ENCODE measurements at regions of chrX and their contacts with region 1.

Region 1: GRCh38 chrX:130086447-130087206 is 23.7 kb downstream of the ELF4 start:
- DNase-seq: peak; percentile 63
- H3K4me3 Mint-ChIP-seq: peak overlapping the region; percentile 80
- H3K27ac Mint-ChIP-seq: peak overlapping the region; percentile 91
- H3K4me1 Mint-ChIP-seq: peaks cover 46% of the 10 kb centered on the region
- H3K27me3 Mint-ChIP-seq: no peaks in the 10 kb centered on the region

Region 2: DNA sequence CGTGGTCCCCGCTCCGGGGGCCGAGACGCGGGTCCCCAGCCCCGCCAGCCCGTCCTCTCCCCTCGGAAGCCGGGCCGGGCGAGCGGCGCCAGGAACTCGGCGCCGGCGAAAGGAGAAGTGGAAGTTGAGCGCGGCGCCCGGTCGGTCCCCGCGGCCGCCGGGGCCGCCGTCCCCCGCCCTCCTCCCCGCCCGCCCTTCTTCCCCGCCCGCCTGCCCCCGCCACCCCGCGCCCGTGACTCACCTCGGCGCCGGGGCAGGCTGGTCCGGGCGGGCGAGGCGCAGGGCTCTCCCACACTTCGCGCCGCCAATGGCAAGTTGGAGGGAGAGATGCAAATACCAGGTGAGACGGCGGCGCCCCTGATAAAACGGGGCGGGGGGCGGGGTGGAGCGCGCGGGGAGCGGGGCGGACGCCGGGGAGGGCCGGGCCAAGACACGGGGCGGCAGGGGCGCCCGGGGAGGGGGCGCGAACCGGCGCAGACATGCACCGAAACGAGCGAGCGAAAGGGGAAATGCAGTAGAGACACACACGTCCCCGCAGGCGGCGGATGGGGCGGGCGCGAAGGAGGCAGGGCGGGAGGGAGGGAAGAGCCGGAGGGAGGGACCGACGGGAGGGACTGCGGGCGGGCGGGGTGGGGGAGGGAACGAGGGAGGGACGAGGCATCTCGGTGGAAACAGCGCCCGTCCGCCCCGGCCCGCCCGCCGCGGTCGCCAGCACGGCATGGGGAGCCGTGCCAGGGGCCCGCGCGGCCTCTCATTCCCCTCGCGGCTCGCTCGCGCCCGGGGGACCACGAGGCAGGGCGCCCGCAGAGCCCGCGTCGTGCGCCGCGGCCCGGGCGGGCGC is 24.0 kb after region 1 on chrX and contains the start of gene ELF4:
- intact Hi-C with region 1: loop called (anchors 2 kb)
- DNase-seq: peak; percentile 29
- H3K4me3 Mint-ChIP-seq: peak within 1 kb of the TSS; percentile 94
- H3K27ac Mint-ChIP-seq: peak within 1 kb of the TSS; percentile 84
- H3K4me1 Mint-ChIP-seq: peaks cover 34% of the 10 kb centered on the region
- H3K27me3 Mint-ChIP-seq: no peaks in the 10 kb centered on the region
- total RNA-seq, gene ELF4: 31.8 and 33.6 TPM in 2 replicates

Region 3: DNA sequence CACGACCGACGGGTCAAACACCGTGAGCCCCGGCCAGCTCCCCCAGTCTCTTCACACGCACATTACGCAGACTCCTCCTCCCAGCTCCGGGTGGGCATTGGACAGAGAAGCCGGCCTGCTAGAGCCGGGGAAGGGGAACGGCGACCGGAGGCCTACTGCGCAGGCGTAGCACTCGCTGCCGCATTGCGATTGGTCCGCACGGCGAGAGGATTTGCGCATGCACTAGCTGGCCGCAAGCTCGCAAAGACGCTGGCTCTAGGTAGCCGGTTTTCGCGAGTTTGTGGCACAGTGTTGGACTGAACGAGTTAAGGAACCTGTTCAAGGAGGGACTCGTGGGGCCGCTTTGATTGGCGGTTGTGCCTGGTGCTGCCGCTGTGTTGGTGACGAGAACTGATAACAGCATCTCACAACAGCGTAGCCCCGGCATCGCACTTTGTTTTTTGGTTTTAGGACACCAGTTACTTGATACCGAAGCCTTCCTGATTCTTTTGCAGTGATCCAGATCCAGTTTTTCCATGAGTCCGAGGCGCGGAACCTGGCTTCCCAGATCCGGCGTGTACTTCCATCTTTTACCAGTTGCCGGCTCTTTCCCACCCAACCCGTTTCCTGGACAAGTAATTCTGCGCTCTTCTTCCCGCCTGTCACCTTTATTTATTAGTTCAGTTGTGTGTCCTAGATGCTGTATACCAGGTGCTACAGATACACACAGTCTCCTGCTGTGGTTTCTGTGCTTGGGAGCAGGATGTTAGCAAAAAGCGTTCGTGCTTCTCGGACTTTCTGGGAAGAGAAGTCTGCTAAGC is 79.3 kb after region 1 on chrX and contains the start of gene AIFM1:
- intact Hi-C with region 1: loop called (anchors 2 kb)
- DNase-seq: peak; percentile 86
- H3K4me3 Mint-ChIP-seq: peak within 1 kb of the TSS; percentile 98
- H3K27ac Mint-ChIP-seq: peak within 1 kb of the TSS; percentile 97
- H3K4me1 Mint-ChIP-seq: peaks cover 31% of the 10 kb centered on the region
- H3K27me3 Mint-ChIP-seq: no peaks in the 10 kb centered on the region
- total RNA-seq, gene AIFM1: 48.7 and 51.1 TPM in 2 replicates

Region 4: DNA sequence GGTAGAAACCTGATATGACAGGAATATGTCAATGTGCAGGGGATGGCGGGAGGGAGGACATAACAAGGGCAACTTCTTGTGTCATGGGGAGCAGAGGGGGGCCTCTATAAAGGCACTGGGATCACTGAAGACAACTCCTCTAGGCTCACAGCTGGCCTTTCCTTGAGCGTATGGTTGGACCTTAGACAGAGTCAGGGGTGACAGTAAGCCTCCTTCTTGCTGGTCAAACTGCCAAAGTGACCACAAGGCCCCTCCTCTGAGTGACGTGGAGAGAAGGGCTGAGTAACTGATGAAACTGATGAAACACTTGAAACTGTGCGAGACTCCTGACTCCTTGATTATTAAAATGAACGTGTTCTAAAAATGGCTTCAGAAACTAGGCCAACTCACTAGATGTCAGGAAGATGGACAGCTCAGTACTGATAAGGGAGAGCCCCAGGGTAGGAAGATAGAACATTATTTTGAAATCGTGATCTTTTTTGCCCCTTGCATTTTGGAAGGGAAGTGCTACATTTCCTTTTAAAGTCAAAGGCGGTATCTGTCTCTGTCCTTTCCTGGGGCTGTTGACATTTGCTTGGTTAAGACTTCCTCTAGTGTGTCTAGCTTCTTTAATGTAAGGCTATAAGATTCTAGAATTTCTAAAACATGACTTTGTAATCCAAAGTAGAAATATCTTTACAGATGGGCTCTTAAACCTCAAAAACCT is 86.7 kb after region 1 on chrX:
- intact Hi-C with region 1: loop called (anchors 2 kb)
- DNase-seq: peak; percentile 22
- H3K4me3 Mint-ChIP-seq: peak overlapping the region; percentile 92
- H3K27ac Mint-ChIP-seq: peak overlapping the region; percentile 90
- H3K4me1 Mint-ChIP-seq: peaks cover 43% of the 10 kb centered on the region
- H3K27me3 Mint-ChIP-seq: no peaks in the 10 kb centered on the region

Measured in activated T-helper 2 cell treated with anti-CD3 and anti-CD28 coated beads, Interferon-gamma antibody, Interleukin-2, Interleukin-4, amounts not matched to agents 10 μg/mL and 5 μg/mL and 100 μg/mL, durations not matched to agents 14 hours and 24 hours and 36 hours (primary cell).